GM13976 (cell line): ENCODE measurements at regions of chr1 and their contacts with region 1.

Region 1: DNA sequence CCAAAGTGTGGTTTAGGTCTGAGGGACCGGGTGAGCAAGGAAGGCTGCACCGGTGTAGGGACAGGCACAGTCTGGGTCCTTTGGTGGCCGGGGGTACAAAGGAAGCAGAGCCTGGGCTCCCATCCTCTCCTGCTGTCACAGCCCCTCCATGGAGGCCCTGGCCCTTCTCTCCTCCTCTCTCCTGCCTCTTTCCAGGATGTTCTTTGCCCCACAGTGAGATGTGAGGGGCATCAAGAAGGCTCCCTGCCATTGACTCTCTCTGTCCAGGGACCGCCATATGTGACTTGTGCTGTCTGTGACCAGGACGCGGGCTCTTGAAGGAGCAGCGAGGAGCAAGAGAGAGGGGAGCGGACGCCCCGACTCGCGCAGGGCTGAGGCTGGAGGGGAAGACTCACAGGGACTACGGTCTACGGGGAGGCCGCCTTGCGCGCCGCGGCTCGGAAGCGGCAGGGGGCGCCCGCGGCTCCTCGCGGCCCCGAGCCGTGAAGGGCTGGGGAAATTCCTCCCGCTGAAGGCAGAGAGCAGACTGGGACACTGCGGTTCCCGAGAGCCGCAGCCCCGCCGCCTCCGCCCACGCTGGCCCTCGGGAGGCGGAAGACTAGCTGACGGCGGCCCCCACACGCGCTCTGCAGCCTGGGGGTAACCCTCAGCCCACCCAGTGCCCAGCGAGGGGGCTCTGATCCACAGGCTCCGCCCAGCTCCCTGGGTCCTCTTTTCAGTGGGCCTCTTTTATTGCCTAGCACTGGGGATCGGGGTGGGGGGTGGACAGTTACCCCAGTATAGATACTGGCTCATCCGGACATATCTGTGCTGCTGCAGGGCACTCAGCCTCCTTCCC is 40.8 kb downstream of the MAB21L3 start:
- DNase-seq: peak; percentile 93
- CTCF ChIP-seq: peak; percentile 94

Region 2: GRCh38 chr1:116001739-116002487 is 150.0 kb before region 1 on chr1:
- in situ Hi-C with region 1: no loop called
- DNase-seq: no peak
- CTCF ChIP-seq: no peak

Region 3: GRCh38 chr1:116345843-116346242 is 193.9 kb after region 1 on chr1:
- in situ Hi-C with region 1: no loop called
- DNase-seq: no peak
- CTCF ChIP-seq: no peak

Region 4: DNA sequence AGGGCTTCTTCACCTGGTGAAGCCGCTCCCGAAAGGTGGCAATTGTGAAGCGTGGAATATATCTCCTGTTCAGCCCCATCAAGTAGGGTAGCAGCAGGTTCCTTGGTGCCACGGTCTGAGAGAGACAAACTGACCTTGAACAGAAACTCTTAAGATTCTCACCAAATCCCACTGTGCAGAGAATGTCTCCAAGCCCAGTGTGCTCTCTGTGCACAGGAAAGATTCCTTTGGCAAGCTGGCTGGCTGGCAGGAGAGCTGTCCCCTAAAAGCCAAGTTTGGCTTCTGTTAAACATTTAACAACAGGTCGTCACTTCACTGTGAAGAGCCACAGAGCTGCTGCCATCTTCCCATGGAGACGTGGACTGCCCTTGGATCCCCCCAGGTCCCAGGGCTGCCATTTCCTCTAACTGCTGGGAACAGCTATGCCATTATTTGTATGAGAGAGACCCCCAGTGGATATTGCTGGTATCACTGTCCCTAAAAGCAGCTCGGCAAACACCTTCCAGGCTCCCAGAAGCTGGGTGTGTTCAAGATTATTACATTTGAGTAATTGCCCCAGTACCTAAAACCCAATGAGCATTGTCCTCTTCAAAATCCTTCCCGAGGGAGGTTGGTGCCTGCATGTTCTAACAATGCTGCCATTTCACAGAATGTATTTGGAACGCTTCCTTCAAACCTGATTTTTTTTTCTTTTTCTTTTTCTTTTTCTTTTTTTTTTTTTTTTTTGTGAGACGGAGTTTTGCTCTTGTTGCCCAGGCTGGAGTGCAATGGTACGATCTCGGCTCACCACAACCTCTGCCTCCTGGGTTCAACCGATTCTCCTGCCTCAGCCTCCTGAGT is 347.1 kb after region 1 on chr1:
- in situ Hi-C with region 1: loop called (anchors 10 kb)
- DNase-seq: peak; percentile 71
- CTCF ChIP-seq: peak; percentile 54